ENCODE measurements at regions of chr5 and their contacts with region 1.

Region 1: DNA sequence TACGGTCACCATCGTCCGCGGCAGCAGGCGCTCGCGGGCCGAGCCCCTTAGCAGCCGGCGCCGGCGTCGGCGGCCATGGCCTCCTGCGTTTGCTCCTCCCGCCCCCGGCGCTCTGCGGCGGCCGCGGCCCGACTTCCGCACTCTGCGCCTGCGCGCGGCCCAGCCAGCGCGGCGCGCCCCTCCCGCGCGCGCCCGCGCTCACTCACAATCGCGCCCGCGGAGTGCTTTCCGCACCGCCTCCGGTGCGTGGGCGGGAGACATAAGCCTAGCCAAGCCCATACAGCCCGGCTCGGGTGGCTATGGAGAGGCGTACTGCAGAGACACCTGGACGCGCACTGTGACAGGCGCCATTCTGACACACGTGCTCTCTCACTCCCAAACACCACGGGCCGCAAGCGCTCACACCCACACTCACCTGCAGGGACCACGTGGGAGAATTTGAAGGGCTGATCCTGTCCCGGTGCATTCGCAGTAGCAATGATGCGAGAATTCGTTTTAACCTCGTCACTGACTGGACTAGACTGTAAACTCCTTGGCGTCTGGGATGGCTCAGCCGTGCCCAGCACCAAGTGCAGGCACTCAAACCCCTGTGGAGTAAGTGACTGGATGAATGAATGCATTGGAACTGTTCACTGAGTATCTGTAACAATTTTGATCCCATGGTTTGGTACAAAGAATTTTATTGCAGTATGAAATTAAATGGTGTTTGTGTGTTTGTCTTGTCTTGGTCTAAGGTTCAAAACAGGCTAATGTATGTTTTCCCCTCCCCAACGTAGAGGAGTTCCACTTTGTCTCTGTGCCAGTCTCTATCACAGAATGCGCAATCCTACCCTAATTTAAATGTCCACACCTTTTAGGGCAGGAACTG is at the start of gene RNF145:
- DNase-seq: peak; percentile 62
- ATAC-seq: peak; percentile 71
- H3K4me3 ChIP-seq: peak within 1 kb of the TSS; percentile 79
- H3K27ac ChIP-seq: peak within 1 kb of the TSS; percentile 83
- H3K4me1 ChIP-seq: peaks cover 9% of the 10 kb centered on the region
- H3K27me3 ChIP-seq: no peaks in the 10 kb centered on the region
- CTCF ChIP-seq: no peak
- EP300 ChIP-seq: no peak
- POLR2A ChIP-seq: peak; percentile 87
- RAD21 ChIP-seq: no peak
- polyA plus RNA-seq, gene RNF145: 18.6 to 25.2 TPM

Region 2: GRCh38 chr5:159178978-159179377 is 30.7 kb before region 1 on chr5:
- CTCF ChIA-PET with region 1: interaction called, 7 read pairs
- POLR2A ChIA-PET with region 1: interaction called, 12 read pairs
- RAD21 ChIA-PET with region 1: interaction called, 8 read pairs
- SMC1A ChIA-PET with region 1: interaction called, 7 read pairs
- in situ Hi-C with region 1: no loop called
- intact Hi-C with region 1: loop called (anchors 2 kb)
- DNase-seq: peak; percentile 51
- ATAC-seq: peak; percentile 84
- H3K4me3 ChIP-seq: no peak overlapping the region
- H3K27ac ChIP-seq: peak overlapping the region; percentile 81
- H3K4me1 ChIP-seq: peaks cover 12% of the 10 kb centered on the region
- H3K27me3 ChIP-seq: no peaks in the 10 kb centered on the region
- CTCF ChIP-seq: no peak
- EP300 ChIP-seq: peak; percentile 74 to 87; a peak in 3 of 4 replicates
- POLR2A ChIP-seq: no peak
- RAD21 ChIP-seq: no peak

Region 3: DNA sequence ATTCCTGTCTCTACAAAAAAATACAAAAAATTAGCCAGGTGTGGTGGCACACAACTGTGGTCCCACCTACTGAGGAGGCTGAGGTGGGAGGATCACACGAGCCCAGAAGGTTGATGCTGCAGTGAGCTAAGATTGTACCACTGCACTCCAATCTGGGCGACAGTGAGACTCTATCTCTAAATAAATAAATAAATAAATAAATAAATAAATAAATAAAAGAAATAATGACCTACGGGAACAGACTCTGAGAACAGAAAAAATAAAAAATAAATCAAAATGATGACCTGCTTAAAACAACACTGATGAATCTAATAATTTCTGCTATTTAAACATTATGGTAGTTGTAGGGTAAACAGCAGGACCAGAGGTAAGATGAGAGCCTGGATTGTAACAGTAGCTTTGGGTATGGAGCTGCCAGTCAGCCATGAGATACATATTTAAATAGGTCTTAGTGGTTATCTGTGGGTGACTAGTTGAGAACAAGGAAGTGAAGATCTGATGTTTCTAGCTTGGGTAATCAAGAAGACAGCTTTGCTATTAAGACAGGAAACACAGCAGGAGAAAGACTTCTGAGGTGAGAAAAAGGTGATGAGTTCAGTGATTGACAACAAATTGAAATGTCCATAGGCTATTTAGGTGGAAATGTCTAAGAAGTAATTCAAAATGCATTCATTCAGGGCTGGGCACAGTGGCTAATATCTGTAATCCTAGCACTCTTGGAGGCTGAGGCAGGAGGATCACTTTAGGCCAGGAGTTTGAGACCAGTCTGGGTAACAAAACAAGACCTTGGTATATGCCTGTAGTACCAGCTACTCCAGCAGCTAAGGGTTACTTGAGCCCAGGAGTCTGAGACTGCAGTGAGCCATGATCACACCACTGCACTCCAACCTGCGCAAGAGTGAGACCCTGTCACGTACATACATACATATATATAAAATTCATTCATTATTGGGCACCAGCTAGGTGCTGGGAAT is 11.3 kb before region 1 on chr5:
- CTCF ChIA-PET with region 1: interaction called, 8 read pairs
- POLR2A ChIA-PET with region 1: interaction called, 25 read pairs
- RAD21 ChIA-PET with region 1: interaction called, 35 read pairs
- SMC1A ChIA-PET with region 1: interaction called, 42 read pairs
- in situ Hi-C with region 1: no loop called
- intact Hi-C with region 1: no loop called
- DNase-seq: peak; percentile 56
- ATAC-seq: peak; percentile 92
- H3K4me3 ChIP-seq: peak overlapping the region; percentile 31; the same call in 1 of the 2 replicates
- H3K27ac ChIP-seq: peak overlapping the region; percentile 63
- H3K4me1 ChIP-seq: peaks cover 24% of the 10 kb centered on the region
- H3K27me3 ChIP-seq: no peaks in the 10 kb centered on the region
- CTCF ChIP-seq: no peak
- EP300 ChIP-seq: no peak
- POLR2A ChIP-seq: no peak
- RAD21 ChIP-seq: no peak

Region 4: DNA sequence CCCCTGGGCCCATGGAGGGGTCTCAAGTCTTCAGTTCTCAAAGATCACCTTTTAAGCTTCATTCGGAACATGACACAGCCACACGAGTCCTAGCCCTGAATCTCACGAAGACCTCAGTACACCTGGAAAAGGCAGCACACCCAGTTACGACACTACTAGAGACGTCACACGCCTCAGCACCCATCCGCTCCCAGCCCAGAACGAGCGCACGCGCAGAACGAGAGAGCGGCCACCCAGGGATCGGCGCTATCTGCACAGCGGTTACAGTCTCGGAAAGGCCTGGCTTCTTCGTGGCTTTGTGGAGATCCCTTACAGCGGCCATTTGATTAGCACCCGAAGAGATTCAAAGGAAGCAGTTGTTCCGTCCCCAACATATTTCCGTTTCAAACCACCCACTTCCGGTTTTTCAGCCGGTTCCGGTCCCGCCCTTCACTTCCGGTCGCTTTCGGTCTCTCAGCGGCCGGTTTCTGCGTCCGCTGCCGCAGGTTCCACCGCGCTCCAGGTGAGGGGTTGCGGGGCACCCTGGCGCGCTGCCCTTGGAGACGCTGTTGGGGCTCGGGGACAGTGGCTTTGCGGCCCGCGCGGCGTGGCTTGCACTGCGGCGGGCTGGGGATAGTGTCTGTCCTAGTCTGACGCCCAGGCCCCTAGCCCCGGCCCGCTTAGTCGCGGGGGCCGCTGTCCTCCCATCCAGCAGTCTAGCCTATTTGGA is 53.3 kb after region 1 on chr5 and contains the start of gene UBLCP1:
- CTCF ChIA-PET with region 1: interaction called, 4 read pairs
- POLR2A ChIA-PET with region 1: interaction called, 3 read pairs
- RAD21 ChIA-PET with region 1: interaction called, 4 read pairs
- SMC1A ChIA-PET with region 1: interaction called, 13 read pairs
- in situ Hi-C with region 1: no loop called
- intact Hi-C with region 1: loop called (anchors 1 kb)
- DNase-seq: peak; percentile 60
- ATAC-seq: peak; percentile 91
- H3K4me3 ChIP-seq: peak within 1 kb of the TSS; percentile 84
- H3K27ac ChIP-seq: peak within 1 kb of the TSS; percentile 97
- H3K4me1 ChIP-seq: no peaks in the 10 kb centered on the region
- H3K27me3 ChIP-seq: no peaks in the 10 kb centered on the region
- CTCF ChIP-seq: no peak
- EP300 ChIP-seq: peak in 1 of 2 experiments; percentile 42; a peak in 1 of 4 replicates
- POLR2A ChIP-seq: peak; percentile 91
- RAD21 ChIP-seq: no peak
- polyA plus RNA-seq, gene UBLCP1: 22.6 to 34.3 TPM

Region 5: GRCh38 chr5:159405611-159406031 is 195.9 kb after region 1 on chr5:
- CTCF ChIA-PET with region 1: no interaction called
- POLR2A ChIA-PET with region 1: no interaction called
- RAD21 ChIA-PET with region 1: no interaction called
- SMC1A ChIA-PET with region 1: no interaction called
- in situ Hi-C with region 1: no loop called
- intact Hi-C with region 1: loop called (anchors 5 kb)
- DNase-seq: peak; percentile 58
- ATAC-seq: peak; percentile 83
- H3K4me3 ChIP-seq: no peak overlapping the region
- H3K27ac ChIP-seq: no peak overlapping the region
- H3K4me1 ChIP-seq: peaks cover 17% of the 10 kb centered on the region
- H3K27me3 ChIP-seq: no peaks in the 10 kb centered on the region; a peak in 1 of 4 replicates
- CTCF ChIP-seq: no peak
- EP300 ChIP-seq: peak in 1 of 2 experiments; percentile 81; a peak in 1 of 4 replicates
- POLR2A ChIP-seq: no peak
- RAD21 ChIP-seq: no peak

Region 6: DNA sequence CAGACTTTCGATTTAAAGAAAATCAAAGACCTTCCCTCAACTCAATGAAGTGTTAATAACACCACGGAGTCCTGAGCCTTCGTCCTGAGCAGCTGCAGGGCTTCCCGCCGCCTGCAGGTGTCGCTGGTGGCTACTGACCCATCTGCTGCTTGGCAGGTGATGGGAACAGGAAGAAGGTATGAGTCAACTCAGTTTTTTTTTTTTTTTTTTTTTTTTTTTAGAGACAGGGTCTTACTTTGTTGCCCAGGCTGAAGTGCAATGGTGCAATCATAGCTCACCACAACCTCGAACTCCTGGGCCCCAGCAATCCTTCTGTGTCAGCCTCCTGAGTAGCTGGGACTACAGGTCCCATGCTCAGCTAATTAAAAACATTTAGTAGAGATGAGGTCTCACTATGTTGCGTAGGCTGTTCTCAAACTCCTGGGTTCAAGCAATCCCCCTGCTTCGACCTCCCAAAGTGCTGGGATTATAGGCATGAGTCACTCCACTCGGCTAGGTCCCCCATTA is 306.3 kb after region 1 on chr5:
- CTCF ChIA-PET with region 1: no interaction called
- POLR2A ChIA-PET with region 1: no interaction called
- RAD21 ChIA-PET with region 1: no interaction called
- SMC1A ChIA-PET with region 1: no interaction called
- in situ Hi-C with region 1: no loop called
- intact Hi-C with region 1: no loop called
- DNase-seq: peak; percentile 26
- ATAC-seq: peak; percentile 97
- H3K4me3 ChIP-seq: no peak overlapping the region
- H3K27ac ChIP-seq: no peak overlapping the region
- H3K4me1 ChIP-seq: peaks cover 3% of the 10 kb centered on the region; the same call in 1 of the 2 replicates
- H3K27me3 ChIP-seq: no peaks in the 10 kb centered on the region
- CTCF ChIP-seq: peak; percentile 68 to 90 (median 89)
- EP300 ChIP-seq: no peak
- POLR2A ChIP-seq: no peak
- RAD21 ChIP-seq: peak; percentile 74